ENCODE measurements at regions of chr9 and their contacts with region 1.

Region 1: DNA sequence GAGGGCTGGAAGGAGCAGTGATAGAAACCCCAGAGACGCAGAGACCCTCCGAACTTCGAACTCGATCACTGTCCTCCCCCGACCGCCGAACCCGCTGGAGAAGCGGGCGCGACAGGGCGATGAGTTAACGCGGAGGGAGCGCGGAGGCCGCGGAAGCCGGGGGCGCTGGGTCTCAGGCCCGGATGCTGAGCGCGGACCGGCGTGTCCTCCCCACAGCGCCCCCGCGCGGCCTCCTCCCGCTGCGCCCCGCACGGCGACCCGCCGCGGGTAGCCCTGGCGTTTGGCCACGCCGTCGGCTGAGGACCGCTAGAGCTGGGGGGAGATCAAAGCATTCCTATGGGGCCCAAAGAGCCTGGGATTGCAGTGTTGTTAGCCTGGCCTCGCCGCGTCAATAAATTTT is 7.7 kb upstream of the DMRT2 start:
- DNase-seq: no peak
- ATAC-seq: peak in 1 of 8 donors; percentile 32
- H3K4me3 ChIP-seq: peak overlapping the region in 7 of 10 donors; percentile 4 to 29 (median 24)
- H3K27ac ChIP-seq: no peak overlapping the region
- H3K4me1 ChIP-seq: peaks cover 0 to 28% (median 9%) of the 10 kb centered on the region in 9 donors
- H3K27me3 ChIP-seq: peaks cover 43 to 100% (median 100%) of the 10 kb centered on the region in 7 donors
- CTCF ChIP-seq: peak in 6 of 9 donors; percentile 20 to 47 (median 38)

Region 2: DNA sequence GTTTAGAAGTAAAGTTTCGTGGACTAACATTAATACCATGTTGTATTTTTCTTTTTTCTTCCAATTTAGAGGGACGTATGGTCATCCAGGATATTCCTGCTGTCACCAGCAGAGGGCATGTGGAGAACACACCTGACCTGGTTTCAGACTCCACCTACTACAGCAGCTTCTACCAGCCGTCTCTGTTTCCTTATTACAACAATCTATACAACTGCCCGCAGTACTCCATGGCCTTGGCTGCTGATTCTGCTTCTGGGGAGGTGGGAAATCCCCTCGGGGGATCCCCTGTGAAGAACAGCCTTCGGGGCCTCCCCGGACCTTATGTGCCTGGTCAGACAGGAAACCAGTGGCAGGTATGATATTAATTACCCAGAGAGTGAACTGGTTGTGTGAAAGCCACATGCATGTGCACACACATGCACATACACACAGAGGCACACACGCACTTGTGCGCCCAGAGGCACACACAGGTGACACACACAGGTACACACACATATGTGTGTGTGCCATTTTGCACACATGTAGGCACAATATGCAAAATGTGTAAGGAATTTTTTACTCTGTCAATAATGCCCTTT is 148.5 kb before region 1 on chr9:
- intact Hi-C with region 1: no loop called
- DNase-seq: peak in 1 of 2 donors; percentile 13
- ATAC-seq: peak in 5 of 8 donors; percentile 44 to 79 (median 74)
- H3K4me3 ChIP-seq: no peak overlapping the region
- H3K27ac ChIP-seq: no peak overlapping the region
- H3K4me1 ChIP-seq: peaks cover 0 to 7% (median 0%) of the 10 kb centered on the region in 9 donors
- H3K27me3 ChIP-seq: peaks cover 0 to 27% (median 9%) of the 10 kb centered on the region in 7 donors
- CTCF ChIP-seq: peak; percentile 31 to 76 (median 69)

Region 3: GRCh38 chr9:942805-943580 is 99.5 kb before region 1 on chr9:
- intact Hi-C with region 1: loop called in 1 of 10 experiments (anchors 5 kb)
- DNase-seq: no peak
- ATAC-seq: no peak
- H3K4me3 ChIP-seq: no peak overlapping the region
- H3K27ac ChIP-seq: no peak overlapping the region
- H3K4me1 ChIP-seq: no peaks in the 10 kb centered on the region
- H3K27me3 ChIP-seq: peaks cover 0 to 63% (median 41%) of the 10 kb centered on the region in 7 donors
- CTCF ChIP-seq: no peak

Region 4: DNA sequence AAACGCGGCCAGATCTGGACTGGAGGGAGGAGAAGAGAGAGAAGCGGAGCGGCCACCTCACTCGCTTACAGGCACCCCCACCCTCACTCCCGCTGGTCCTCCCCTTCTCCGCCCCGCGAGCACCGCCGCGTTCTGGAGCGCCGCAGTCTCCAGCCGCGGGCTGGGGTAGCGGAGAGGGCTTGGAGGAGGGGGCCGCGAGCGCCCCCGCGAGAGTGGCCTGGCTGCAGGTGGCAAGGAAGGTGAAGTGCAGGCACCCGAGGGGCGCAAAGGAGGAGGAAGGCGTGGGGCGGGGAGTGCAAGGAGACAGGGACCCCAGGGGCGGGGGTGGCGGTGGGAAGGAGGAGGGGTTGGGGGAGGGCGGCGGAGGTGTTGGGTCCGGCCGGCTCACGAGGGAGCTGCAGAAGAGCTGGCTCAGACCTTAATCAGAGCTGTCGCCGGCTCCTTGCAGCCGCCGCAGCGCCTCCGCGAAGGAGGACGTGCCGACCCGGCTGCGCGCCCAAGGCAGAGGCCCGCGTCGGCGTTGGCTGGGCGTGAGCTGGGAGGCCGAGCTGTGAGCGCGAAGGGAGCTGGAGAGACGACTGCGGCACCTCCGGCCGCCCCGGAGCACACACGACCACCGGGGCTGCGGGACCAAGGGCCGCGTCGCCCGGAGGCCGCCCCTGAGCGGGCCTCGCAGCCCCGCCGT is 66.1 kb before region 1 on chr9 and contains the start of gene DMRT3:
- intact Hi-C with region 1: loop called in 1 of 10 experiments (anchors 10 kb)
- DNase-seq: no peak
- ATAC-seq: peak in 1 of 8 donors; percentile 26
- H3K4me3 ChIP-seq: peak within 1 kb of the TSS in 3 of 10 donors; percentile 7 to 16 (median 10)
- H3K27ac ChIP-seq: no peak within 1 kb of the TSS
- H3K4me1 ChIP-seq: peaks cover 3 to 34% (median 28%) of the 10 kb centered on the region in 9 donors
- H3K27me3 ChIP-seq: peaks cover 67 to 100% (median 99%) of the 10 kb centered on the region in 7 donors
- CTCF ChIP-seq: no peak
- total RNA-seq, gene DMRT3: not detected

Region 5: GRCh38 chr9:1009101-1009707 is 33.3 kb before region 1 on chr9:
- intact Hi-C with region 1: no loop called
- DNase-seq: peak; percentile 72 to 84
- ATAC-seq: peak; percentile 87 to 95 (median 92)
- H3K4me3 ChIP-seq: no peak overlapping the region
- H3K27ac ChIP-seq: no peak overlapping the region
- H3K4me1 ChIP-seq: peaks cover 0 to 22% (median 0%) of the 10 kb centered on the region in 9 donors
- H3K27me3 ChIP-seq: peaks cover 0 to 58% (median 26%) of the 10 kb centered on the region in 7 donors
- CTCF ChIP-seq: peak; percentile 89 to 98 (median 94)